Endothelial cell of umbilical vein (primary cell): ENCODE measurements at regions of chr17 and their contacts with region 1.

Region 1: GRCh38 chr17:60577147-60577915 is 22.7 kb upstream of the PPM1D start:
- DNase-seq: peak; percentile 67
- H3K4me3 ChIP-seq: peak overlapping the region in 2 of 3 experiments; percentile 5 to 10
- H3K27ac ChIP-seq: peak overlapping the region; percentile 3
- H3K4me1 ChIP-seq: peaks cover 21% of the 10 kb centered on the region
- H3K27me3 ChIP-seq: no peaks in the 10 kb centered on the region
- CTCF ChIP-seq: no peak
- POLR2A ChIP-seq: no peak

Region 2: DNA sequence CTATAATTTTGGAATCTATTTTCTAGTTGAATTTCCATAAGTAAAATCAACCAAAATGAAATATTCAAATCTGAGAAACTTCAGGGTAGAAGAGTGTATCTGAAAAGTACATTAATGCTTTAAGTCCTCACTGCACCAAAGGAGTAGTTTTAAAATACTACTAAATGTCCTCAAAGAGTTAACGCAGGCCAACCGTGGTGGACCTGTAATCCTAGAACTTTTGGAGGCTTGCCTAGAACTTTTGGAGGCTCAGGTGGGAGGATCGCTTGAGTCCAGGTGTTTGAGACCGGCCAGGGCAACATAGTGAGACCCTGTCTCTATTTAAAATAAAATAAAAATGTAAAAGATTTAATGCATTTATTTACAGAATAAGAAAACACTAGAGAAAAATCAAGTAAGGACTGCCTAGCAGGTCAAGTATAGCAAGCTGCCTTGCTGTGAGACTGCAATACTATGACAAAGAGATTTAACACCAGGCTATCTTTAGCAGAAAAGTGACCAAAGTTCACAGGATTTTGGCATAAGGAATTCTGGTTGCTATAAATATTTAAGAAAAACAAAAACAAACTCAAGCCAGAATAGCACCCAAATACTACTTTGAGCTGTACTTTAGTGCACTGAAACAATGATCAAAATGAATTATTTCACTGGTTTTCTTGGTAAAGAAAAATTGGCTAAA is 114.0 kb before region 1 on chr17:
- CTCF ChIA-PET with region 1: no interaction called
- POLR2A ChIA-PET with region 1: no interaction called
- dilution Hi-C with region 1: no loop called
- intact Hi-C with region 1: no loop called
- DNase-seq: no peak
- H3K4me3 ChIP-seq: no peak overlapping the region
- H3K27ac ChIP-seq: no peak overlapping the region
- H3K4me1 ChIP-seq: peaks cover 9% of the 10 kb centered on the region
- H3K27me3 ChIP-seq: no peaks in the 10 kb centered on the region
- CTCF ChIP-seq: no peak
- POLR2A ChIP-seq: no peak

Region 3: DNA sequence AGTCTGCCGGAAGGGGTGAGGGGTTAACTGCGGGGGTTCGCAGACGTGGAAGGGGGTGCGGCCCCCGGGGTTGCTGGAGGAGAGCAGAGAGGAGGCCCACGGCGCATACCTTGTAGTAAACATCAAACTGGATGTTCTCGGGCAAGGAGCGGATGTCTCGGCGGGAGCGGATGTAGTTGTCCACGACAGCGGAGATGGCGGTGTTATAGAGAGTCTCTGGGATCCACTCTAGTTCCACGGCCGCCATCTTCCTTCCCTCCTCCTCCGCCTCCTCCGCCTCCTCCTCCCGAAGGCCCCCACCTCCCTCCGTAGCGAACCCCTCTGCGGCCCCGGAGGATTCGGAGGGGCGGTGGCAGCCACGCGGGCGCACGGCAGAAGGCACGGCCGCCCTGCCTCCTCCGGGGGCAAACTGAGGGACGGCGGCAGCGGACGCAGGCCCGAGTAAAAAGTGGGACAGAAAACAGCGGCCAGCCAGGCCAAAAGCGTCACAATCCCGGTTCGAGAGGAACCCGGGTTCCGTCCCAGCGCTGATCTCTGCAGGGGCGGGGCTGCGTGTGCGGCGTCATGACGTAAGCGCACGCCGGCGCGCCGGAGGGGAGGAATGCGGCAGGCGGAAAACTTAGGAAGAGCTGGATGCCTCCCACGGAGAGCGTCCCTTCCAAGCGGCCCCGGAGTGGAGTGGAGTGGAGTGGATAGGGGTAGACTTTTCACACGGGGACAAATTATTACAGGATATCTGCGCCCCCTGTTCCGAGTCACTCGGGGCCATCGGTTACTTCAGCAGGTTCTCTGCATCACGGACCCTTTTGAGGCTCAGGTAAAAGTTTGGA is 51.4 kb before region 1 on chr17 and contains the start of gene APPBP2:
- CTCF ChIA-PET with region 1: interaction called, 8 read pairs
- POLR2A ChIA-PET with region 1: interaction called, 10 read pairs
- dilution Hi-C with region 1: no loop called
- intact Hi-C with region 1: loop called (anchors 1 kb)
- DNase-seq: peak; percentile 90
- H3K4me3 ChIP-seq: peak within 1 kb of the TSS; percentile 71 to 94 (median 91)
- H3K27ac ChIP-seq: peak within 1 kb of the TSS; percentile 86
- H3K4me1 ChIP-seq: peaks cover 11% of the 10 kb centered on the region
- H3K27me3 ChIP-seq: no peaks in the 10 kb centered on the region
- CTCF ChIP-seq: no peak
- POLR2A ChIP-seq: peak; percentile 97
- total RNA-seq, gene APPBP2: 42.0 and 49.1 TPM in 2 replicates

Region 4: GRCh38 chr17:60594734-60595133 is 17.4 kb after region 1 on chr17:
- CTCF ChIA-PET with region 1: interaction called, 162 read pairs
- POLR2A ChIA-PET with region 1: interaction called, 24 read pairs
- dilution Hi-C with region 1: no loop called
- intact Hi-C with region 1: loop called (anchors 1 kb)
- DNase-seq: no peak
- H3K4me3 ChIP-seq: no peak overlapping the region
- H3K27ac ChIP-seq: no peak overlapping the region
- H3K4me1 ChIP-seq: peaks cover 7% of the 10 kb centered on the region
- H3K27me3 ChIP-seq: peaks cover 0 to 5% of the 10 kb centered on the region in 2 experiments
- CTCF ChIP-seq: no peak
- POLR2A ChIP-seq: no peak